Tibial artery (tissue), 4 donors: ENCODE measurements at regions of chr4 and their contacts with region 1.

Region 1: GRCh38 chr4:53702334-53703266 is 111.3 kb upstream of the LNX1 start:
- DNase-seq: peak; percentile 82 to 87
- H3K4me3 ChIP-seq: peak overlapping the region; percentile 23 to 41
- H3K27ac ChIP-seq: peak overlapping the region; percentile 48 to 52
- H3K4me1 ChIP-seq: peaks cover 0 to 24% (median 18%) of the 10 kb centered on the region in 4 donors
- H3K27me3 ChIP-seq: no peaks in the 10 kb centered on the region
- CTCF ChIP-seq: no peak

Region 2: GRCh38 chr4:53189011-53189410 is 513.6 kb before region 1 on chr4:
- intact Hi-C with region 1: no loop called
- DNase-seq: no peak
- H3K4me3 ChIP-seq: no peak overlapping the region
- H3K27ac ChIP-seq: peak overlapping the region; percentile 29 to 49
- H3K4me1 ChIP-seq: peaks cover 0 to 46% (median 16%) of the 10 kb centered on the region in 4 donors
- H3K27me3 ChIP-seq: no peaks in the 10 kb centered on the region
- CTCF ChIP-seq: no peak

Region 3: DNA sequence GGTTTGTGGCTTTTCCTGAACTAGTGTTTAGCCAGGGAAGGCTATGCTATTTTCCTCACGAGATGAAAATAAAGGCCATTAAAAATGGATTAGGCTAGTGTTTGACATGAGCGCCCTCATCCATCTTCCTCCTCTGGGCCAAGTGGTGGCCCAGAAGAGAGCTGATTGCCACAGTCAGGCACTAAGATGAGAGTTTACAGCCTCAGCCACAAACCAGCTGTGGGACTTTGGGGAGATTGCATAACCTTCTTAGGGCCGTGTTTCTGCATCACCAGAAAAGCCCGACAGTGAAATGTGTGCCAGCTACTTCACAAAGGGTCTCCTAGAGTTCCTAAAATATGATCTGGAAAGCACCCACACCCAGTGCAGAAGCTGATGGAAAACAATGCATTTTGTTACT is 69.0 kb before region 1 on chr4:
- intact Hi-C with region 1: loop called (anchors 2 kb)
- DNase-seq: peak in 1 of 2 donors; percentile 23
- H3K4me3 ChIP-seq: no peak overlapping the region
- H3K27ac ChIP-seq: no peak overlapping the region
- H3K4me1 ChIP-seq: no peaks in the 10 kb centered on the region
- H3K27me3 ChIP-seq: no peaks in the 10 kb centered on the region
- CTCF ChIP-seq: no peak